Naive thymus-derived CD4-positive, alpha-beta T cell (primary cell): ENCODE measurements at regions of chr13 and their contacts with region 1.

Region 1: DNA sequence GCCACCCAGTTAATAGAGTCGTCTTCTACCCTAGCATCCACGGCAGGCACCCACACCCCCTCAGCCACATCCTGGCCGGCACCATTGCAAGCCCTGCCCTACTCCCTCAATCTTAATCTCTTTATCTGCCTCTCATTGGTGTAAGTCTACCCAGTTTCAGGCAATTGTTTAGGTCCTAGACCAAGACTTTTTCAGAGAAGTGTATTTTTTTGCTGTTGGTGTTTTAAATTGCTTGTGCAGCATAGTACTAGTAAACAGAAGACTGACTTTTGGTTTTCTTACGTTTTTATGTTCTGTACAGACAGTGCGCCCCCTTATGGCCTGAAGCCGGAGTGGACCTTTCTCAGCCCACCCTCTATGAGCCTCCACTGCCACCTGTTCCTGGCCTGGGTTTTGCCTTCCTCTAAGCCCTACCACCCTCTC is 2.3 kb upstream of the LCP1 start:
- DNase-seq: peak in 8 of 9 donors; percentile 60 to 74 (median 69)
- ATAC-seq: peak; percentile 75
- H3K4me3 ChIP-seq: peak overlapping the region; percentile 83
- H3K4me3 Mint-ChIP-seq: peak overlapping the region; percentile 67 to 99 (median 85)
- H3K27ac ChIP-seq: peak overlapping the region; percentile 82
- H3K27ac Mint-ChIP-seq: peak overlapping the region; percentile 86 to 99 (median 96)
- H3K4me1 ChIP-seq: peaks cover 27 to 35% of the 10 kb centered on the region in 2 donors
- H3K4me1 Mint-ChIP-seq: peaks cover 35 to 48% (median 38%) of the 10 kb centered on the region in 7 donors
- H3K27me3 ChIP-seq: no peaks in the 10 kb centered on the region
- H3K27me3 Mint-ChIP-seq: peaks cover 0 to 3% (median 0%) of the 10 kb centered on the region in 5 donors

Region 2: GRCh38 chr13:45340926-45341750 is 843.1 kb before region 1 on chr13 and contains the start of gene TPT1:
- CTCF ChIA-PET with region 1: no interaction called
- POLR2A ChIA-PET with region 1: no interaction called
- intact Hi-C with region 1: loop called in 1 of 2 experiments (anchors 2 kb)
- DNase-seq: peak; percentile 99 to 100 (median 99)
- ATAC-seq: peak; percentile 91
- H3K4me3 ChIP-seq: peak within 1 kb of the TSS; percentile 94
- H3K4me3 Mint-ChIP-seq: peak within 1 kb of the TSS; percentile 95 to 100 (median 98)
- H3K27ac ChIP-seq: peak within 1 kb of the TSS; percentile 99
- H3K27ac Mint-ChIP-seq: peak within 1 kb of the TSS; percentile 92 to 100 (median 99)
- H3K4me1 ChIP-seq: peaks cover 35 to 43% of the 10 kb centered on the region in 2 donors
- H3K4me1 Mint-ChIP-seq: peaks cover 35 to 70% (median 57%) of the 10 kb centered on the region in 7 donors
- H3K27me3 ChIP-seq: no peaks in the 10 kb centered on the region
- H3K27me3 Mint-ChIP-seq: no peaks in the 10 kb centered on the region
- total RNA-seq, gene TPT1: 4,230 to 13,134 (median 7,796) TPM

Region 3: GRCh38 chr13:46126552-46127357 is 57.5 kb before region 1 on chr13:
- CTCF ChIA-PET with region 1: interaction called, 3 read pairs
- POLR2A ChIA-PET with region 1: no interaction called
- intact Hi-C with region 1: loop called in 1 of 2 experiments (anchors 1 kb)
- DNase-seq: peak; percentile 44 to 74 (median 66)
- ATAC-seq: peak; percentile 94
- H3K4me3 ChIP-seq: no peak overlapping the region
- H3K4me3 Mint-ChIP-seq: peak overlapping the region in 3 of 10 donors; percentile 6 to 34 (median 8)
- H3K27ac ChIP-seq: peak overlapping the region; percentile 66
- H3K27ac Mint-ChIP-seq: peak overlapping the region; percentile 60 to 96 (median 87)
- H3K4me1 ChIP-seq: peaks cover 11 to 31% of the 10 kb centered on the region in 2 donors
- H3K4me1 Mint-ChIP-seq: peaks cover 35 to 54% (median 49%) of the 10 kb centered on the region in 7 donors
- H3K27me3 ChIP-seq: no peaks in the 10 kb centered on the region
- H3K27me3 Mint-ChIP-seq: peaks cover 0 to 2% (median 0%) of the 10 kb centered on the region in 5 donors

Region 4: GRCh38 chr13:46168341-46168740 is 15.9 kb before region 1 on chr13:
- CTCF ChIA-PET with region 1: interaction called, 9 read pairs
- POLR2A ChIA-PET with region 1: interaction called, 117 read pairs
- intact Hi-C with region 1: loop called (anchors 1 kb)
- DNase-seq: peak in 2 of 9 donors; percentile 61 to 62
- ATAC-seq: peak; percentile 68
- H3K4me3 ChIP-seq: peak overlapping the region; percentile 15
- H3K4me3 Mint-ChIP-seq: peak overlapping the region; percentile 73 to 99 (median 81)
- H3K27ac ChIP-seq: peak overlapping the region; percentile 82
- H3K27ac Mint-ChIP-seq: peak overlapping the region; percentile 80 to 95 (median 89)
- H3K4me1 ChIP-seq: peaks cover 87 to 95% of the 10 kb centered on the region in 2 donors
- H3K4me1 Mint-ChIP-seq: peaks cover 85 to 96% (median 93%) of the 10 kb centered on the region in 7 donors
- H3K27me3 ChIP-seq: no peaks in the 10 kb centered on the region
- H3K27me3 Mint-ChIP-seq: no peaks in the 10 kb centered on the region

Region 5: GRCh38 chr13:46288570-46289259 is 104.4 kb after region 1 on chr13:
- CTCF ChIA-PET with region 1: no interaction called
- POLR2A ChIA-PET with region 1: interaction called, 4 read pairs
- intact Hi-C with region 1: loop called (anchors 1 kb)
- DNase-seq: peak in 7 of 9 donors; percentile 46 to 75 (median 70)
- ATAC-seq: peak; percentile 84
- H3K4me3 ChIP-seq: no peak overlapping the region
- H3K4me3 Mint-ChIP-seq: no peak overlapping the region
- H3K27ac ChIP-seq: no peak overlapping the region
- H3K27ac Mint-ChIP-seq: peak overlapping the region in 3 of 9 donors; percentile 8 to 18 (median 16)
- H3K4me1 ChIP-seq: peaks cover 0 to 17% of the 10 kb centered on the region in 2 donors
- H3K4me1 Mint-ChIP-seq: peaks cover 4 to 29% (median 15%) of the 10 kb centered on the region in 7 donors
- H3K27me3 ChIP-seq: no peaks in the 10 kb centered on the region
- H3K27me3 Mint-ChIP-seq: no peaks in the 10 kb centered on the region

Region 6: GRCh38 chr13:46468570-46469463 is 284.5 kb after region 1 on chr13:
- CTCF ChIA-PET with region 1: no interaction called
- POLR2A ChIA-PET with region 1: no interaction called
- intact Hi-C with region 1: no loop called
- DNase-seq: no peak
- ATAC-seq: no peak
- H3K4me3 ChIP-seq: no peak overlapping the region
- H3K4me3 Mint-ChIP-seq: no peak overlapping the region
- H3K27ac ChIP-seq: no peak overlapping the region
- H3K27ac Mint-ChIP-seq: no peak overlapping the region
- H3K4me1 ChIP-seq: no peaks in the 10 kb centered on the region
- H3K4me1 Mint-ChIP-seq: no peaks in the 10 kb centered on the region
- H3K27me3 ChIP-seq: no peaks in the 10 kb centered on the region
- H3K27me3 Mint-ChIP-seq: no peaks in the 10 kb centered on the region

Region 7: DNA sequence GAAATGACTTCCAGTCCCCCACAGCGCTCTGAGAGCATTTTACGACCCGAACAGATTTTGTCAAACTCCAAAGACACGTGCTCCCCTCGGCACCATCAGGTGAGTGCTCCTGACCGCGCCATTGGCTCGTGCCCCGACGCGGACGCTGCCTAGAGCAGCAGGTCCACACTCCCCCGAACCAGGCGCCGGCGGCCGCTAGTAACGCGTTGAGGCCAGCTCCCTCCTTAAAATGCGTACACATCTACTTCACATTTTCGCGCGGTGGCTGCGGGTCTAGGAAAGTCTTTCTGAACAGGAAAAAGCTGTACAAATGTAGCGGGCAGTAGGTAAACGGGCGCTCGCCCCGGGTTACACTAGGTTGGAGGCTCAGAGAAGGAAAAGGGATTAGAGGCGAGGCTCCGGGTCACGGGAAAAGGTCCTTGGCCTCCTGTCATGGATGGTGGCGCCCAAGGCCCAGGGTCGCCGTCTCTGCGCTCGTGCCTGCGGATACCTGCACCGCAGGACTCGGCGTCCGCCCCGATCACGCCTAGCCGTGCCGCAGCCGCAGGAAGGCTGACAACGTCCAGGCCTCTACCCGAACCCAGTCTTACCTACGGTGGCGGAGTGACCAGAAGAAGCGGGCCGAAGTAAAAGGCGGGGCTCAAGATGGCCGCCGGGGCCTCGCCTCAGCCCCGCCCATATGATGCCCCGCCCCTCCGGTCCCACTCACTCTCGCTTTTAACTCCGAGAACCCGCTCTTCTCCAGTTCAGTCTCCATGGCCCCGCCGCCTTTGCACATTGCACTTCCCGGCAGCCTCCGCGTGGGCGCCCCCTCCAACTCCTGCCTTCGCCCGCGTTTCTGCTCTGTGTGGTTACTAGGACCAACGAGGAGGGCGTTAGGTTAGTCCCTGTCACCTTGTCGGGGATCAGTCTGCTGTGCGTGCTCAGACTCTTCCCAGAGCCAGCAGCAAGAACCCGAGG is 612.5 kb after region 1 on chr13 and contains the start of gene ESD:
- CTCF ChIA-PET with region 1: no interaction called
- POLR2A ChIA-PET with region 1: no interaction called
- intact Hi-C with region 1: loop called in 1 of 2 experiments (anchors 5 kb)
- DNase-seq: peak; percentile 75 to 92 (median 85)
- ATAC-seq: peak; percentile 97
- H3K4me3 ChIP-seq: peak within 1 kb of the TSS; percentile 85
- H3K4me3 Mint-ChIP-seq: peak within 1 kb of the TSS; percentile 91 to 99 (median 93)
- H3K27ac ChIP-seq: peak within 1 kb of the TSS; percentile 82
- H3K27ac Mint-ChIP-seq: peak within 1 kb of the TSS; percentile 92 to 99 (median 98)
- H3K4me1 ChIP-seq: peaks cover 14 to 33% of the 10 kb centered on the region in 2 donors
- H3K4me1 Mint-ChIP-seq: peaks cover 20 to 53% (median 48%) of the 10 kb centered on the region in 7 donors
- H3K27me3 ChIP-seq: no peaks in the 10 kb centered on the region
- H3K27me3 Mint-ChIP-seq: peaks cover 0 to 7% (median 0%) of the 10 kb centered on the region in 5 donors
- total RNA-seq, gene ESD: 35.3 to 80.1 (median 57.0) TPM